Psoas muscle (tissue), 8 donors: ENCODE measurements at regions of chr7 and their contacts with region 1.

Region 1: DNA sequence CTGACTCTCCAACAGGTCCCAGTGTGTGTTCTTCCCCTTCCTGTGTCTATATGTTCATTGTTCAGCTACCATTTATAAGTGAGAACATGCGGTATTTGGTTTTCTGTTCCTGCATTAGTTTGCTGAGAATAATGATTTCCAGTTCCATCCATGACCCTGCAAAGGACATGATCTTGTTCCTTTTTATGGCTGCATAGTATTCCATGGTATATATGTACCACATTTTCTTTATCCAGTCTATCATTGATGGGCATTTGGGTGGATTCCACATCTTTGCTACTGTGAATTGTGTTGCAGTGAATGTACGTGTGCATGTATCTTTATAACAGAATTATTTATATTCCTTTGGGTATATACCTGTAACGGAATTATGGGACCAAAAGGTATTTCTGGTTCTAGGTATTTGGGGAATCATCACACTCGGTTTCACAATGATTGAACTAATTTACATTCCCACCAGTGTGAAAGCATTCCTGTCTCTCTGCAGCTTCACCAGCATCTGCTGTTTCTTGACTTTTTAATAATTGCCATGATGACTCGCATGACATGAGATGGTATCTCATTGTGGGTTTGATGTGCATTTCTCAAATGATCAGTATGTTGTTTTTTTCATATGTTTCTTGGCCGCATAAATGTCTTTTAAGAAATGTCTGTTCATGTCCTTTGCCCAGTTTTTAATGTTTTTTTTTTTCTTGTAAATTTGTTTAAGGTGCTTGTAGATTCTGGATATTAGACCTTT is 60.2 kb downstream of the LSMEM1 start:
- DNase-seq: no peak
- ATAC-seq: no peak
- H3K4me3 ChIP-seq: no peak overlapping the region
- H3K27ac ChIP-seq: no peak overlapping the region
- H3K4me1 ChIP-seq: no peaks in the 10 kb centered on the region
- H3K27me3 ChIP-seq: no peaks in the 10 kb centered on the region
- CTCF ChIP-seq: no peak

Region 2: GRCh38 chr7:112346381-112347060 is 194.5 kb before region 1 on chr7:
- intact Hi-C with region 1: no loop called
- DNase-seq: no peak
- ATAC-seq: no peak
- H3K4me3 ChIP-seq: no peak overlapping the region
- H3K27ac ChIP-seq: no peak overlapping the region
- H3K4me1 ChIP-seq: no peaks in the 10 kb centered on the region
- H3K27me3 ChIP-seq: no peaks in the 10 kb centered on the region
- CTCF ChIP-seq: no peak

Region 3: DNA sequence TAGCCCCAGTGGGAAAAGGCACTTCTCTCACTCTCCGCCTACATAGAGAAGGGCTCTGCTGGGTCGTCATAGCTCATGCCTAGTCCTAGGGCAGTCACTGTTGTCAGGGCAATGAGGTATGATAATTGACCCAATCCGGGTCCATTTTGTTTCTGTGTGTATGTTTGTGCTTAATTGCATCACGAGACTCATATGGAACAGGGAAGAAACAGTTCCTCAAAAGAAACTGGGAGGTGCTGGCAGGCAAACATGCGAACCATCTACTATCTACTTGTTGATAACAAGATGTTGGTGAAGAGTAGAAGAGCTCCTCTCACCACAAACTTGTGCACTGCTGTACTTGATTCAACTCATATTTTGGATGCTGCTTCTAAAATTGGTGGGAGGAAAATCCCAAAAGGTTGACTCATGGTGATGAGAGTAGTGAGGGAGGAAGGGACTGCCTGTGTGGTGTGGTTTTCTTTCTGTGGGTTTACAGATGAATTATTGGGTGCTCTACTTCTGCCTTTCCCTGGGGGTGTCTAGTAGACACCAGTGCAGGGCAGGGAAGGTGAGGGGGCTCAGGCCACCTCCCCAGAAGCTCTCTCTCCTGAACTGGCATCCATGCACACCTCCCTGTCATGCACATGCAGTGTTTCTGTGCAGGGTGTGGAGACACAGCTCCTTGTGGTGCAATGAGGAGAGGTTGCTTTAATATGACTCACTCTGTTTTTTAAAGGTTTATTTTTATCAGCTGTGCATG is 30.8 kb before region 1 on chr7:
- intact Hi-C with region 1: no loop called
- DNase-seq: no peak
- ATAC-seq: peak in 3 of 4 donors; percentile 29 to 51 (median 51)
- H3K4me3 ChIP-seq: no peak overlapping the region
- H3K27ac ChIP-seq: no peak overlapping the region
- H3K4me1 ChIP-seq: no peaks in the 10 kb centered on the region
- H3K27me3 ChIP-seq: no peaks in the 10 kb centered on the region
- CTCF ChIP-seq: no peak

Region 4: DNA sequence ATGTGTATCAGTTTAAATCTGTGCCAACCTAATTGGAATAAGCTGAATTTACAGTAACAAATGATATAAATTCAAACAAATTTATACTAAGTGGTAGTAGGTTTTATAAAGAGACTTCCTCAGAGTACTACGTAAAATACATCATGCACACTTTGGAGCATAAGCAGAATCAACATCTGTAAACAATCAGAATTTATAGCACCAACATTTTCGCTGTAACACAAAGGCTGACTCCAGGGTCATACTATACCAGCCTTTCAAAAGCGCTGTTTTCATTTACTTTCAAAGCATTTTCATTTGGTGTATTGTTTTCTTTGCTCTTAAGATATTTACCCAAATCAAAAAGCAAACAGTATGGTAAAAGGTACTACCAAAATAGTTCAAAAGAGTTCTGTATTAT is 278.5 kb after region 1 on chr7:
- intact Hi-C with region 1: no loop called
- DNase-seq: no peak
- ATAC-seq: no peak
- H3K4me3 ChIP-seq: no peak overlapping the region
- H3K27ac ChIP-seq: no peak overlapping the region
- H3K4me1 ChIP-seq: no peaks in the 10 kb centered on the region
- H3K27me3 ChIP-seq: no peaks in the 10 kb centered on the region
- CTCF ChIP-seq: no peak

Region 5: DNA sequence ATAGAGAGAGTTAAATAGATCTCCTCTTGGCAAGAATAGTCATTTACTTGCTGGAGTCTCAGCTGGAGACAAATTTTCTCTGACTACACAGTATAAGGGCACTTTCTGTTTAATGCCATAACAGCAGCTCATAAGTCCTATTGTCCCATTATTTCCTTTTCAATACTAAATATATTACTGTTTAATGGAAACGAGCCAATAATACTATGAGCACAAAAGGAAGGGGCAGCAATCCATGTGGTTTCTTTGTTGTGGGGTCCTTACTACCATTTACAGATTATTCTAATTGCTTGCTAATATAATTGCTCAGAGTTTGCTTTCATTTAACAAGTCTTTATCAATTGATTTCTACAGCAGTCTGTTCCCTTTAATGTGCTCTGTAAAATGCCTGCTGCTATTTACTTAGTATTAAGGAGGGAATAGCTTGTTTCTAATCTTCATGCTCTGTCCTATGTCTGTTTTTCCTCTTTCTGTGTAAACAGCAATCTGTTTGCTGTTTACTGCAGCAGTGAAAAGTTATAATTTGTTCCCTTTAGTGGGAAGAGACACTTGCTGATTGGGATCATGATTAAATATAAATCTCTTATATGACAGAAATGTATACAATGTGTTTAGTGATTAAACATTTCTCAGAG is 873.5 kb after region 1 on chr7:
- intact Hi-C with region 1: loop called in 1 of 2 experiments (anchors 5 kb)
- DNase-seq: no peak
- ATAC-seq: no peak
- H3K4me3 ChIP-seq: no peak overlapping the region
- H3K27ac ChIP-seq: no peak overlapping the region
- H3K4me1 ChIP-seq: no peaks in the 10 kb centered on the region
- H3K27me3 ChIP-seq: no peaks in the 10 kb centered on the region
- CTCF ChIP-seq: no peak